ENCODE measurements at regions of chr11 and their contacts with region 1.

Region 1: DNA sequence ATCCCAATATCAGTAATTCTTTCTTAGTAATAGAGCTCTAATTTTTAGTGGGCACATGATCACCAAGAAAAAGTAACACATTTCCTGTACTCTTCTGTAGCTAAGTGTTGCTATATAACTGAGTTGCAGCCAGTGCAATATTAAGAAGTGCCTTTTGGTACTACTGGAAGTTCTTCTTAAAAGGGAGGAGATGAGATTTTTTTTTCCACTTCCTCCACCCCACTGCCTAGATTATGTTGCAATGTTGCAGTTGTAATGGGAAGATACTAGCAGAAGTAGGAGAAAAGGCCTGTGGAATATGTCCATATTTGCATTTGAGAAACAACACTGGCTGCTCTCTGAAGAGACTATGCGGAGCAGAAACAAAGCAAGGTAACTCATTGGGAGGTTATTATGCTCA is 280.6 kb upstream of the ANO5 start:
- DNase-seq: no peak
- ATAC-seq: peak; percentile 45

Region 2: DNA sequence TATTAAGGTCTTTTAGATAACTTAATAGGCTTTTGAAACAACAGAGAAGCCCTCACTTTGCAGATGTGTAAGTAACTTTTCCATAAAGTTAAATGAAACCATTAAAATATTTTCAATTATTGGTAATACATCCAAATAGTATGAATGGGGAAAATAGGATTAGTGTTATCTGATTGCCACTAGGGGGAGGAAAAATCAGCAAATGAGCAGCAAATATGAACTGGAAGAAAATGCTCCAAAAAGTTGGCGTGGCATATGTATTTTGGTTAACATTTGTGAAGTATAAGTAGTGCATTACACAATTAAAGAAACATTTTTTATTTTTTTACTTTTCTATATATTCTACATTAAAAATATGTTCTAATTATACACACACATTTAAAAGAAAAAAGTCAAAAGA is 20.8 kb after region 1 on chr11:
- intact Hi-C with region 1: loop called (anchors 2 kb)
- DNase-seq: no peak
- ATAC-seq: no peak

Measured in sciatic nerve (tissue), 2 donors.